ENCODE measurements at regions of chr15 and their contacts with region 1.

Region 1: DNA sequence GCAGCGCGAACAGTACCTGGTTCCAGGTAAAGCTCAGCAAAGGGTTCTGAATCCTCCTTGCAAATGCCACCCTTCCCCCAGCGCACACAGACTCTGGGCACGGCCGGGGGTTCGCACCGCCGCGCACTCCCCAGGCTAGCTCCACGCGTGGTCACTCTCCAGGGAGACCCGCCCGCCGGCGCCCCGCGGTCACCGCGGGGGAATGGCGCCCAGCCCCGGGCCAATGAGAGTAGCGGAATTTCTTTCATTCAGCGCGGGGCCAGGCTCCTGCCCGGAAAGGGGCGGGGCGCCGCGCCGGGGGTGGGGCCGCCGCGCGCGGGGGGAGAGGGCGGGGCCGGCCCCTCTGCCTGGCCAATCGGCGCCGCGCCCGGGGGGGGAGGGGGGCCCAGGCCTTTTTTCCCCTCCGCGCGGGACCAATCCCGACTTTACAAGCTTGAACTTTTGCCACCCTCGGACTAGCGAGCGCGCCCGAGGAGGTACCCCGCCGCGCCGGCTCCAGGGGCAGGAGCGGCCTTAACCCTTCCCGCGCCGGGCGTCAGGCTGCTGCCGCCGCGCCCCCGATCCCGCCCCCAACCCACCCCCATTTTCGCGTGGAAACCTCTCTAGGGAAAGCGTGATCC is 1.1 kb upstream of the SMAD6 start:
- DNase-seq: peak; percentile 96

Region 2: DNA sequence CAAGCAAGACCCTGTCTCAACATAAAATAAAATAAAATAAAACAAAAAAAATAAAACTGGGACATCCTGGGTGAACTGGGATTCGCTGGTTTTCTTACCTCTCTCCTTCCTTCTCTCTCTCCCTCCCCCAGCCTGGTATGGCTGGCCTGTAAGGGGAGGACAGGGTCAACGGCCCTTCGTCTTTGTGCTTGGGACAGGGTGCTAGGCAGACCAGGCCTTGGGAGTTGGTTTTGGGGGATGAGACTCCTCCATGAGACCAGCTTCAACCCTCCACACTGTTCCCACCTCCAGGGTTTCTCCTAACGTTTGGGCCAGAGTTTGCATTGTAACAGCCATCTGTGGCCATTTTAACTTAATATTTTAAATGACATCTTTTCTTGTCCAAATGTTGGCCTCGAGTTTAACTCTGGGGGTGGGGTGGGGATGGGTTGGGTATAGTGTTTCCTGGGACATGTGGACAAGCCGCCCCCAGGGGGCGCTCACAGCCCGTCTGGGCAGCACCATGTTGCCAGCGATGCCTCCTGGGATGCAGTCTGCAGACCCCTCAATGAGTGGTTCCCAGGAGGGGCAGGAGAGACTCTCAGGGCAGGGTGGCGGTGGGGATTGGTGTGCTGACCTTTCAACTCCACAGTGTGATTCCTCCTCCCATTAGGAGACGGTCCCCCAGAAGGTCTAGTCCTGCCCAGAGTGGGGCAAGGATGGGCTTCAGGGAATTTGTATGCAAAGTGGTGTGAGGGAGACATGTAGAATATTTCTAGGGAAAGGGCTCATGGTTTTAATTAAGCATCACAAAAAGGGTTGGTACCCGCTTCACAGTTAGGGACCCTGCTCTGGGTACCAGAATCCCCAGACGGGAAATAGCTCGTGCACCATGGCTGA is 97.4 kb before region 1 on chr15:
- intact Hi-C with region 1: loop called (anchors 5 kb)
- DNase-seq: peak; percentile 87

Region 3: GRCh38 chr15:66619151-66619903 is 81.6 kb before region 1 on chr15:
- intact Hi-C with region 1: loop called (anchors 1 kb)
- DNase-seq: peak; percentile 86

Region 4: GRCh38 chr15:66661432-66662096 is 39.3 kb before region 1 on chr15:
- intact Hi-C with region 1: loop called (anchors 2 kb)
- DNase-seq: peak; percentile 82

Region 5: DNA sequence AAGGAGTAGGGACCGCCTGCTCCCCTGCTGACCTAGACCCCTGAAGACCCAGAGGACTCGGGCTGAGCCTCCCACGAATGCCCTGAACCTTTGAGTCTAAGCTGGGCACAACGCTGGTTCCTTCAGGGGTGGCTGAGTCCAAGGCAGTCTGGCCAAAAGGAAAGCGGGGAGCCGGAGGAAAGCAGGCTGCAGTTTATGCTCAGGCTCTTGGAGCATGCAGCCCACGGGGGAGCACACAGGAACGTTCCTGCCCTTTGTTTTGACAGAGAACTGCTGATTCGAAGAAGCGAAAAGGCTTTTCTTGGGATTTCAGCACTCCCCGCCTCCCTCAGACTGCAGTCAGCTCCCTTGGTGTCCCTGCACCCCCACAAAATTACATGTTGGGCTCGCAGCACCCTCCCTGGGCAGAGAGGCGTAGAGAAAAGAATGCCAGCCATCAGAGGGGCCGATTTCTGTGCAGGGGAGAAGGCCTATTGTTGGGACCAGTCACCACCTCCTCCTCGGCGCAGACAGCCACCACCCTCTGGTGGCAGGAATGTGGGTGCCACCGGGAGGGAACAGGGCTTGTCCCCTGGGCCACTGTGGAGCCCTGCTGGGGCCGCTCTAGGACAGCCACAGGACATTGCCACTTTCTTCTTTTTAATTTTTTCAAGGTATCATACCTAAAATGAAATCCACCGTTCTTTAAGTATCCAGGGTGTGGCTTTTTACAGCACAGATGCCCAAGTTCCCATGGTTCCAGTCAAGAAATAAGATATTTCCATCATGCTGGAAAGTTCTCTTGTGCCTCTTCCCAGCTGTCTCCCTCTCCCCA is 73.3 kb after region 1 on chr15:
- intact Hi-C with region 1: loop called (anchors 1 kb)
- DNase-seq: peak; percentile 92

Region 6: GRCh38 chr15:66851226-66852071 is 150.5 kb after region 1 on chr15:
- intact Hi-C with region 1: loop called (anchors 2 kb)
- DNase-seq: peak; percentile 91